WTC11 (cell line): ENCODE measurements at regions of chr2 and their contacts with region 1.

Region 1: GRCh38 chr2:96345438-96345837 is 9.9 kb downstream of the NCAPH start:
- DNase-seq: peak; percentile 19
- ATAC-seq: peak; percentile 91
- H3K4me3 Mint-ChIP-seq: no peak overlapping the region
- H3K27ac Mint-ChIP-seq: no peak overlapping the region
- H3K4me1 Mint-ChIP-seq: no peaks in the 10 kb centered on the region
- H3K27me3 Mint-ChIP-seq: no peaks in the 10 kb centered on the region
- CTCF ChIP-seq: no peak

Region 2: GRCh38 chr2:96320728-96321622 is 24.5 kb before region 1 on chr2:
- CTCF ChIA-PET with region 1: interaction called, 10 read pairs
- POLR2A ChIA-PET with region 1: no interaction called
- DNase-seq: peak; percentile 55
- ATAC-seq: peak; percentile 43
- H3K4me3 Mint-ChIP-seq: peak overlapping the region; percentile 90
- H3K27ac Mint-ChIP-seq: no peak overlapping the region
- H3K4me1 Mint-ChIP-seq: peaks cover 23% of the 10 kb centered on the region
- H3K27me3 Mint-ChIP-seq: peaks cover 68% of the 10 kb centered on the region
- CTCF ChIP-seq: no peak